ENCODE measurements at regions of chr14 and their contacts with region 1.

Region 1: DNA sequence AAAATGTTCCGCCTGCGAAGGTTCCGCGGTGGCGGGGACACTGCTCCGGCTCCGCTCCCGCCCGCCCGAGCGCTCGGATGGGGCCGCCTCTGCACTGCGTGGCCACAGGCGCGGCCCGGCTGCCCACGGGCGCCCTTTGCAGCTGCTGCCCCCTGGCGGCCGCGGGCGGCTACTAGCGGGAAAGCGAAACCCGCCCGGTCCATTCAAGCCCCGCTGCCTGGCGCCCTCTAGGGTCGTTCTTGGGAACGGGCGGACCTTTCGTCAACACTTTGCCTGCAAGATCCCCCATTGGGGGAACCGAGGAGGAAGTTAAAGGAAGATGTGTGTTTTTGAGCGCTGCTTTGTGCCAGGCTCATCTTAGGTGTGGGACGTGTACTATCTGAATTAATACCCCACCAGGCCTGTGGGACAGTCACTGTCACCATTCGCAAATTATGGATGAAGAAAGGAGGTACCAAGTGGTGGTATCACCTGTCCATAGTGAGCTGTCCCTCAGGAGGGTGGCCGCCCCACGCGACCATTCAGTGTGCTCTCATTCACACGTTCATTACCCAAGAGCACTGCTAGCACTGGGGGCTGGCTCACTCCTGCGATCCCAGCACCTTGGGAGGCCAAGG is 19.4 kb downstream of the GPR132 start:
- DNase-seq: peak; percentile 94
- H3K4me3 ChIP-seq: no peak overlapping the region
- H3K27ac ChIP-seq: no peak overlapping the region
- H3K4me1 ChIP-seq: peaks cover 0 to 7% (median 4%) of the 10 kb centered on the region in 4 donors
- H3K27me3 ChIP-seq: peaks cover 10% of the 10 kb centered on the region
- CTCF ChIP-seq: peak; percentile 99 to 100 (median 100)
- EP300 ChIP-seq: no peak
- POLR2A ChIP-seq: no peak

Region 2: GRCh38 chr14:104870420-104871144 is 175.2 kb before region 1 on chr14:
- in situ Hi-C with region 1: no loop called
- intact Hi-C with region 1: no loop called
- DNase-seq: peak; percentile 44
- H3K4me3 ChIP-seq: no peak overlapping the region
- H3K27ac ChIP-seq: no peak overlapping the region
- H3K4me1 ChIP-seq: peaks cover 11 to 19% (median 17%) of the 10 kb centered on the region in 4 donors
- H3K27me3 ChIP-seq: no peaks in the 10 kb centered on the region
- CTCF ChIP-seq: peak in 3 of 5 experiments; percentile 21 to 35 (median 31)
- EP300 ChIP-seq: no peak
- POLR2A ChIP-seq: no peak

Region 3: DNA sequence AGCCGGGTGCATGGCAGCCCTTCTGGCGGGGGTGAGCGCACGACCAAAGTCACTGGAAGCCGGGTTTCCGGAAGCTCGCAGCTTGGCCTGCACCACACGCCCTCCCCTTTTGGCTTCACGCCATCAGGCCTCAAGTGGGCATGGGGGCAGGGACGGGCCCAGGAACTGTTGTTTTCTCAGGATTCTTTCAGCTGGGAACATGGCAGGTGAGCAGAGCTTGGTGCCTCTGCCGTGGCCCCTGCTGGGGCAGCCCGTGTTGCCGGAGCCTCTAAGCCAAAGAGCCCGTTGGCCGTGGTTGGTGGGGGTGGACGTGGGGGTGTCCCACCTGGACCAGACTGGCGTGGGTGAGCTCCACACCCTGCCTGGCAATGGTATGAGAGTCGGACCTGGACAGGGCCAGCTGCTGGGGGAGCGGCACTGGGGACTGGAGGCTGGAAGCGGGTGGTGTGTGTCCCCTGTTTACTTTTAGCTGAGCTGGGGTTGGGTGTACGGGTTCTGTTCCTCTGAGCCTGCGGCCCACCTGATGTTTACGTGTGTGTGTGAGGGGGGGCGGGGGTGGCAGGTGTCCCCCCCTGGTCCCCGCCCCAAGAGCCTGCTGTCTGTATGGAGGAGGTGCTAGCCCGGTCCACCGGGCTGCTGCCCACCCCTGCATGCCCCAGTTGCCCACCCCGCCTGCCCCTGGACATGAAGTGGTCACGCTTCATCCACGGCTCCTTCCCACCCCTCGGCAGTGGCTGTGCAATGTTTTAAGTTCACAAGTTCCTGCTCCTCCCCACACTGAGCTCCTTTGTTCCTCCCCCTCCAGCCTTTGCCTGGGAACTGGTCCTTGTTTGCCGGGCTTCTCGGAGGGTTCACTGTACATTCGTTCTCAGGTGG is 149.8 kb before region 1 on chr14:
- in situ Hi-C with region 1: no loop called
- intact Hi-C with region 1: loop called (anchors 2 kb)
- DNase-seq: peak; percentile 11
- H3K4me3 ChIP-seq: no peak overlapping the region
- H3K27ac ChIP-seq: no peak overlapping the region
- H3K4me1 ChIP-seq: peaks cover 0 to 6% (median 0%) of the 10 kb centered on the region in 4 donors
- H3K27me3 ChIP-seq: no peaks in the 10 kb centered on the region
- CTCF ChIP-seq: no peak
- EP300 ChIP-seq: no peak
- POLR2A ChIP-seq: no peak

Region 4: DNA sequence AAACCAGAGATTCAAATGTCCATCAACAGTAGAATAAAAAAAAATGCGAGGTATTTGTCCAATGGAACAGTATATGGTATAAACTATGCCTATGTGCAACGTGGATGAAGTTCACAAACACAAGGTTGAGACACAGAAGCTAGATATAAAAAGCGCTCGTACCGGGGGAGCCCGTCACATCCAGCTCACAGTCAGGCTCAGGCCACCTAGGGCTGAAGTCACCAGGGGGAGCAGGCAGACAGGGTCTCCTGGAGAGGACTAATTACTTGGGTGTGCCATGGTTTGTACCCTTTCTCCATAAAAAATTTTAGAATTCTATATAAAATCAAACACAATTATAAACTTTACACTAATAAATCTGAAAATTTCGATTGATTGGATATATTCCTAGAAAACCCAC is 81.3 kb before region 1 on chr14:
- in situ Hi-C with region 1: no loop called
- intact Hi-C with region 1: no loop called
- DNase-seq: no peak
- H3K4me3 ChIP-seq: no peak overlapping the region
- H3K27ac ChIP-seq: no peak overlapping the region
- H3K4me1 ChIP-seq: peaks cover 0 to 28% (median 22%) of the 10 kb centered on the region in 4 donors
- H3K27me3 ChIP-seq: peaks cover 40% of the 10 kb centered on the region
- CTCF ChIP-seq: no peak
- EP300 ChIP-seq: no peak
- POLR2A ChIP-seq: no peak

Region 5: GRCh38 chr14:104976198-104977007 is 69.4 kb before region 1 on chr14:
- in situ Hi-C with region 1: loop called in 2 of 4 experiments (anchors 5 to 10 kb)
- intact Hi-C with region 1: loop called (anchors 5 kb)
- DNase-seq: peak; percentile 91
- H3K4me3 ChIP-seq: no peak overlapping the region
- H3K27ac ChIP-seq: peak overlapping the region in 1 of 4 donors; percentile 19
- H3K4me1 ChIP-seq: peaks cover 58 to 72% (median 67%) of the 10 kb centered on the region in 4 donors
- H3K27me3 ChIP-seq: peaks cover 43% of the 10 kb centered on the region
- CTCF ChIP-seq: peak; percentile 91 to 97 (median 95)
- EP300 ChIP-seq: no peak
- POLR2A ChIP-seq: no peak

Region 6: GRCh38 chr14:105012171-105012985 is 33.4 kb before region 1 on chr14:
- in situ Hi-C with region 1: no loop called
- intact Hi-C with region 1: loop called (anchors 5 kb)
- DNase-seq: peak; percentile 34
- H3K4me3 ChIP-seq: no peak overlapping the region
- H3K27ac ChIP-seq: no peak overlapping the region
- H3K4me1 ChIP-seq: peaks cover 0 to 25% (median 3%) of the 10 kb centered on the region in 4 donors
- H3K27me3 ChIP-seq: no peaks in the 10 kb centered on the region
- CTCF ChIP-seq: peak; percentile 42 to 54 (median 44)
- EP300 ChIP-seq: no peak
- POLR2A ChIP-seq: no peak